Body of pancreas (tissue), 4 donors: ENCODE measurements at regions of chr19 and their contacts with region 1.

Region 1: DNA sequence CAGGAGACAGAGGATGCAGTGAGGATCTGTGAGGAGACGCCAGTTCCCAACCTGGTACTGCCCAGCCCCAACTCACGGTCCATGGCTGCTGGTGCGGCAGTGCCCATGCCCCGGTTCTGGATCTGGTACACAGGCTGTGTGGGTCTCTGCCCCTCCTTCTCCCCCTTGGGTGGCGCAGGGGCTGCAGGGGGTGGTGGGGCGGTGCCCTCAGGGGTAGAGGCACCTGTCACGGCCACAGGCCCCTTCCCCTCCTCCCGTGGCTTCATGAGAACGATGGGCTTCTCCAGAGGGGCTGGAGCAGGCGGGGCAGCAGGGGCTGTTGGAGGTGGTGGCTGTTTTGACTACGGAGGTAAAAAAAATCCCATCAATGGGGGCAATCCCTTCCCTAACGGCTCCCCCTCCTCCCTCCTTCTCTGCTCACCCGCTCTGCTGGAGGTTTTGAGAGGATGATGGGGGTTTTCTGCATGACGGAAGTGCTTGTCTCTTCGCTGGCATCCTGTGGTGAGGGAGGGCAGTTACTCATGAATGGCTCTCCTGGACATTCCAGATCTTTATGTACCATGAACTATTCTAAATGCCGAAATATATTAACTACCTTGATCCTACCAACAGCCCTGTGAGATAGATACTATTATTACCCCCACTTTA is 7.1 kb downstream of the SMG9 start:
- DNase-seq: no peak
- ATAC-seq: no peak
- H3K4me3 ChIP-seq: no peak overlapping the region
- H3K27ac ChIP-seq: no peak overlapping the region
- H3K4me1 ChIP-seq: no peaks in the 10 kb centered on the region
- H3K27me3 ChIP-seq: no peaks in the 10 kb centered on the region
- CTCF ChIP-seq: no peak
- POLR2A ChIP-seq: no peak

Region 2: DNA sequence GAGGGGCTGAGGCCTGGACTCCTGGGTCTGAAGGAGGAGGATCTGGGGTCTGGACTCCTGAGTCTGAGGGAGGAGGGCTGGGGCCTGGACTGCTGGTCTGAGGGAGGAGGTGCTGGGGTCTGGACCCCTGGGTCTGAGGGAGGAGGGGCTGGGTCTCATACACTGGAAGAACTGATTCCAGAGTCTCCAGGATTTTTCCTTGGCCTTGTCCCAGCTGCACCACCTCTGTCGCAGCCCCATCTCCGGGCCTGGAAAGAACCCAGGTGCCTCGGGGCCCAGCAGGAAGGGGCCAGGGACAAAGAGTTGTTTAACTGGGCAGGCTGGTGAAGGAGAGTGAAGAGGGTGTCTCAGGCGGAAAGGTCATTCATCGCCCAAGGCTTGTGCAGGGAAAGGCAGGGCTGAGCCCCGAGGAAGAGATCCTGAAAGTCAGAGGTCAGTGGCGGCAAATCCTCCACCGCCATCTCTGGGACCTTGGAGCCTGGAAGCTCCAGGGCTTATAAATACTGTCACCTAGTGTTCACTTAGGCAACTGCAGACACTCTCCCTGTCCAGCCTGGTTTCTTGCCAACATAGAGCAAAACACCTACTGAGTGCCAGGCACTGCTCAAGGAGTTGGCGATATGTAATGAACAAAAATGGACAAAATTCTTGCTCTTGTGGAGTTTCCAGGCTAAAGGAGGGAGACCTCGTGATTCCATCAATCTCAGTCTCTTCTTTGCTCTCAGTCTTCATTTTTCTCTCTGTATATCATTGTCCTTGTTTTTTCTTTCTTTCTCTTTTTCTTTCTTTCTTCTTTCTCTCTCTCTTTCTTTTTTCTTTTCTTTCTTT is 37.5 kb after region 1 on chr19:
- intact Hi-C with region 1: loop called (anchors 5 kb)
- DNase-seq: peak in 3 of 4 donors; percentile 46 to 63 (median 51)
- ATAC-seq: peak; percentile 68
- H3K4me3 ChIP-seq: no peak overlapping the region
- H3K27ac ChIP-seq: no peak overlapping the region
- H3K4me1 ChIP-seq: no peaks in the 10 kb centered on the region
- H3K27me3 ChIP-seq: no peaks in the 10 kb centered on the region
- CTCF ChIP-seq: peak; percentile 81 to 94 (median 90)
- POLR2A ChIP-seq: no peak

Region 3: DNA sequence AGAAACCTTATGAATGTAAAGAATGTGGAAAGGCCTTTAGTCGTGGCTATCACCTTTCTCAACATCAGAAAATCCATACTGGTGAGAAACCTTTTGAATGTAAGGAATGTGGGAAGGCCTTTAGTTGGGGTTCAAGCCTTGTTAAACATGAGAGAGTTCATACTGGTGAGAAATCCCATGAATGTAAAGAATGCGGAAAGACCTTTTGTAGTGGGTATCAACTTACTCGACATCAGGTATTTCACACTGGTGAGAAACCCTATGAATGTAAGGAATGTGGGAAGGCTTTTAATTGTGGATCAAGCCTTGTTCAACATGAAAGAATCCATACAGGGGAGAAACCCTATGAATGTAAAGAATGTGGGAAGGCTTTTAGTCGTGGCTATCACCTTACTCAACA is 100.2 kb after region 1 on chr19:
- intact Hi-C with region 1: no loop called
- DNase-seq: no peak
- ATAC-seq: no peak
- H3K4me3 ChIP-seq: no peak overlapping the region
- H3K27ac ChIP-seq: no peak overlapping the region
- H3K4me1 ChIP-seq: no peaks in the 10 kb centered on the region
- H3K27me3 ChIP-seq: no peaks in the 10 kb centered on the region
- CTCF ChIP-seq: no peak
- POLR2A ChIP-seq: no peak